ENCODE measurements at regions of chr2 and their contacts with region 1.

Region 1: DNA sequence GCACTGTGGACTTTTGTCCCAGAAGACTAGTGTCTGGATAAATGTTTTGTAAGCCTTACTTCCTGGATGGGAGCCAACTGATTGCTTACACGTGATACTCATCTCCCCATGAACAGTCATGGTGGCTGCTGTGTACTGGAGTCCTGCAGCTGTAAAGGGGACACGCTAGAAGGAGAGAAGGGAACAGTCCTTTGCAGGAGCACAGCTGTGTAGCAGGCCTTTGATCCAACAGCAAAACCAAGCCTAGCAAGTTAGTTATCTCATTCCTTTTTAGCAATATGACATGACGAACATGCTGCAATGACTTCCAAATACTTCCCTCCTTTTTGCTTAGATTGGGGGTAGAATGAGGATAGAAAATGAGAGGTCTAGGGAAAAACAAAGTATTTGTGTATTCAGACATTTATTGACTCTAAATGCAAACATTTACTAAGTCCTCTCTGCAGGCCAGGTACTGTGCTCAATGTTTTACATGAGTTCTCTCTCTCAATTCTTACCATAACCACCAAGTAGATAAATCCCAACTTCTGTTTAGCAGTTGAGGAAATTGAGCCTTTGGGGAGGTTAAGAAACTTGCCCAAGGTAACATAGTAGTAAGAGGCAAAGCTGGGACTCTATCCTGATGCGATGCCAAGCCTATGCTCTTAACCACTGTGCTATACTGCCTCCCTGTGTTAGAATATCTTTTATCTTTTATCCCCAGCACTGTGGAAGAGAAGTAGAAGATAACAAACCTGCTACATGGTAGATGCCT is 55.4 kb upstream of the CD28 start:
- DNase-seq: peak in 1 of 2 experiments; percentile 53
- H3K4me3 ChIP-seq: no peak overlapping the region
- H3K4me3 Mint-ChIP-seq: peak overlapping the region; percentile 24
- H3K27ac Mint-ChIP-seq: peak overlapping the region; percentile 89
- H3K4me1 ChIP-seq: peaks cover 51% of the 10 kb centered on the region
- H3K4me1 Mint-ChIP-seq: peaks cover 60% of the 10 kb centered on the region
- H3K27me3 ChIP-seq: no peaks in the 10 kb centered on the region
- H3K27me3 Mint-ChIP-seq: no peaks in the 10 kb centered on the region
- CTCF ChIP-seq: peak; percentile 24 to 37

Region 2: DNA sequence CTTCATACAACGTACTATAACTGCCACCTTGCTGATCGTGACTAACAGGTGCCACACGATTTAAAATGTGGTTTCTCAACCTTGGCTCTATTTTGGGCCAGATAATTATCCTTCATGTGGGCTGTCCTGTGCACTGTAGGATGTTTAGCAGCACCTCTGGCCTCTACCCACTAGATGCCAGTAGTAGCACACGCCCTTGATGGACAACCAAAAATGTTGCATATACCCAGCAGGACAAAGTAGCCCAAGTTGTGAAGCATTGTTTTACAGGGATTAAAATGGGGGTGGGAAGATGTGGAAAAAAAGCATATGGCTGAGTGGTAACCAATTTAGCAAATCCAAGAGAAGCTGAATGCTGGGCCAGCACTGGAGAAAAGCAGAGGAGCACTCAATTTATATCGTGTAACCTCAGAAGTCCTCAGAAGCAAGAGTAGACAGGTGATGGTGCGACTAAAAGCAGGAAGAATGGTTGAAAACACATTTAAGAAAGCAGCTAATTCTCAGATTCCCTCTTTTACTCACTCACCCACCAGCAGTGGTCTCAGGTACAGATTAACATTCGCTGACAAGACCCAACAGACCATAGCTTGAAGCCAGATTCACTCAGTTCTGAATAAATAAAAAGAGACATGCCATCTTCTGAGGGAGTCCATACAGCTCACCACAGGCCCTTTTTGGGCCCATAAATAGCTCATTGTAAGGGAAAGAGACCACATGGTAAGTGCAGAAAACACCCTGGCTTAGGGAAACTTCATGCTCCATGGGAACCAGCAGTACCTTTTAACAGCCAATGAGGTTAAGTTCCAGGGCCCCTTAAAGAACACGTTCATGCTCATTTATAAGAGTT is 166.5 kb before region 1 on chr2:
- CTCF ChIA-PET with region 1: no interaction called
- POLR2A ChIA-PET with region 1: no interaction called
- intact Hi-C with region 1: loop called (anchors 1 kb)
- DNase-seq: peak; percentile 39 to 41
- H3K4me3 ChIP-seq: no peak overlapping the region
- H3K4me3 Mint-ChIP-seq: no peak overlapping the region
- H3K27ac Mint-ChIP-seq: no peak overlapping the region
- H3K4me1 ChIP-seq: no peaks in the 10 kb centered on the region
- H3K4me1 Mint-ChIP-seq: no peaks in the 10 kb centered on the region
- H3K27me3 ChIP-seq: no peaks in the 10 kb centered on the region
- H3K27me3 Mint-ChIP-seq: no peaks in the 10 kb centered on the region
- CTCF ChIP-seq: peak; percentile 41 to 75

Region 3: GRCh38 chr2:203535078-203535783 is 115.8 kb before region 1 on chr2 and contains the start of gene RAPH1:
- CTCF ChIA-PET with region 1: interaction called, 3 read pairs
- POLR2A ChIA-PET with region 1: interaction called, 5 read pairs
- intact Hi-C with region 1: loop called (anchors 2 kb)
- DNase-seq: peak; percentile 92
- H3K4me3 ChIP-seq: peak within 1 kb of the TSS; percentile 84
- H3K4me3 Mint-ChIP-seq: peak within 1 kb of the TSS; percentile 97
- H3K27ac Mint-ChIP-seq: peak within 1 kb of the TSS; percentile 36
- H3K4me1 ChIP-seq: peaks cover 4% of the 10 kb centered on the region; the same call in 1 of the 2 replicates
- H3K4me1 Mint-ChIP-seq: peaks cover 14% of the 10 kb centered on the region
- H3K27me3 ChIP-seq: no peaks in the 10 kb centered on the region
- H3K27me3 Mint-ChIP-seq: no peaks in the 10 kb centered on the region
- CTCF ChIP-seq: no peak
- total RNA-seq, gene RAPH1: 109 and 114 TPM in 2 replicates

Region 4: GRCh38 chr2:203578759-203579643 is 72.0 kb before region 1 on chr2:
- CTCF ChIA-PET with region 1: no interaction called
- POLR2A ChIA-PET with region 1: no interaction called
- intact Hi-C with region 1: loop called (anchors 2 kb)
- DNase-seq: peak; percentile 89 to 92
- H3K4me3 ChIP-seq: no peak overlapping the region
- H3K4me3 Mint-ChIP-seq: peak overlapping the region; percentile 4
- H3K27ac Mint-ChIP-seq: peak overlapping the region; percentile 88
- H3K4me1 ChIP-seq: peaks cover 30% of the 10 kb centered on the region
- H3K4me1 Mint-ChIP-seq: peaks cover 21% of the 10 kb centered on the region
- H3K27me3 ChIP-seq: no peaks in the 10 kb centered on the region
- H3K27me3 Mint-ChIP-seq: no peaks in the 10 kb centered on the region
- CTCF ChIP-seq: no peak

Region 5: GRCh38 chr2:203605302-203605701 is 45.7 kb before region 1 on chr2:
- CTCF ChIA-PET with region 1: no interaction called
- POLR2A ChIA-PET with region 1: no interaction called
- intact Hi-C with region 1: loop called (anchors 2 kb)
- DNase-seq: peak; percentile 34 to 36
- H3K4me3 ChIP-seq: no peak overlapping the region
- H3K4me3 Mint-ChIP-seq: no peak overlapping the region
- H3K27ac Mint-ChIP-seq: no peak overlapping the region
- H3K4me1 ChIP-seq: peaks cover 18% of the 10 kb centered on the region; the same call in 1 of the 2 replicates
- H3K4me1 Mint-ChIP-seq: peaks cover 5% of the 10 kb centered on the region
- H3K27me3 ChIP-seq: no peaks in the 10 kb centered on the region
- H3K27me3 Mint-ChIP-seq: no peaks in the 10 kb centered on the region
- CTCF ChIP-seq: no peak

Region 6: DNA sequence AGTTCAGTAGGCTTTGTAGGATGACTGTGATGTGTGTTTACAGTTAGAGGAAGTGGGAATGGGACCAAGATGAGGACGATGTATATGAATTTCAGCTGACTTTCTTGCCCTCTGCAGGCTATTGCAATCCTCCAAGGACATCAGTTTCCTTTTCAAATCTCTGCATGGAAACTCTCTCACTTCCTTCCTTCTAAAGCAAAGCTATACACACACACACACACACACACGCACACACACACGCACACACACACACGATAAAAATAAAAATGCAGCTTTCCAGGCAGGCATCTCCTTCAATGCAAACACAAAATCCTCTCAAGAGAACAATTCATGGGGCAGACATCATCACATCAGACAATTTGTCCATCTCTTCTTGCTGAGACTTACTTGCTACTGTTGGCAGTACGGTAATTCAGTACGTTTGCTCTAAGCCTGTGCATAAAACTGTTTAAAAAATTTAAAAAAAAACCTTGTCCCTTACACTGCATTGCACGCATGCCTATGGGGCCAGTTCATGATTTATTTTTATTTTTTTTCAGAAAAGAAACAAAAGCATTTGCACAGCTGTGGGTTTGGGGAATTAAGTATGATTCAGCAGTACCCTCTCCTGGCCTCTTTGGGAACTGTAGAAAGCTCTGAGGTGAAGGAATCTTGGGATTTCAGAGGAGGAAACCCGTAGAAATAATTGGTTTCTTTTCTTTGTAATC is 258.4 kb after region 1 on chr2:
- CTCF ChIA-PET with region 1: no interaction called
- POLR2A ChIA-PET with region 1: no interaction called
- intact Hi-C with region 1: loop called (anchors 1 kb)
- DNase-seq: peak in 1 of 2 experiments; percentile 53
- H3K4me3 ChIP-seq: no peak overlapping the region
- H3K4me3 Mint-ChIP-seq: peak overlapping the region; percentile 9
- H3K27ac Mint-ChIP-seq: no peak overlapping the region
- H3K4me1 ChIP-seq: peaks cover 14% of the 10 kb centered on the region
- H3K4me1 Mint-ChIP-seq: peaks cover 14% of the 10 kb centered on the region
- H3K27me3 ChIP-seq: no peaks in the 10 kb centered on the region
- H3K27me3 Mint-ChIP-seq: no peaks in the 10 kb centered on the region
- CTCF ChIP-seq: peak; percentile 79 to 80

Measured in Caco-2 (cell line).